Heart left ventricle (tissue), 16 donors: ENCODE measurements at regions of chr16 and their contacts with region 1.

Region 1: DNA sequence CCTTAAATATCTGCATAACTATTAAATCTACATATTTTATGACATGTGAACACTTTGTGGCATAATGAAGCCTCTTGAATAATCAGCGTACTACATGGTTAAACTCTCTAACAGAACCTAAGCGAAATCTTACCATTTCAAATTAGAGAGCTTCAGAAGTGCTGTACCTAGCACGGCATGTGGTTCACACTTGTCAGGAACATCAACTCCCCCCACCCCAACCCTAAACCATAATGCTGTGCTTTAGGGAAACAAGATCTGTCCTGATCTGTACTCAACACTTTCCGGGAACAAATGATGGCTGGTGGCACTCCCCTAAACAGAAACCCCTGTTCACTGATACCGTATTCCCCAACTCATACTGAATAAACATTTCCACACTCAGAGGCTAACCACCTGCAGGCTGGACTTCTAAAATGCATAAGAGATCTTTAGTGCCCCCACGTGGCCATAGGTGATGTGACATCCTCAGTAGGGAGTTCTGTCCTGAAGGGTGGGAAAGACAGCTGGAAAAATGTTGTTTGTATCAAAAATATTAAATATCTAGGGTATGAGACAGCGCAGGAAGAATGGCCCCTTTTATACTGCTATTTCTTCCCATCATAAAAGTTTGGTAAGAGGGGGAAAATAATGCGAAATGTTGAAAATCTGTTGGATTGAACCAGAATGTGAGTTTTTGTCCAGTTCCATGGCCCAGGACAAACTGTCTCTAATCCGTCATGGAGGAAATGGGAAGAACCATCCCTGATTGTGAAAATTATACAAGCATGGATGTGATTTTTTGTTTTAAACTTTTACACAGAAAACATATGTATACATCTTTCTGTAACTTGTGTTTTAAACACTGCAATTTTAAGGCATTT is 88.6 kb downstream of the USP31 start:
- DNase-seq: peak in 4 of 5 donors; percentile 57 to 73 (median 60)
- ATAC-seq: peak; percentile 57 to 84 (median 79)
- H3K4me3 ChIP-seq: no peak overlapping the region
- H3K27ac ChIP-seq: no peak overlapping the region
- H3K4me1 ChIP-seq: peaks cover 0 to 14% (median 5%) of the 10 kb centered on the region in 12 donors
- H3K27me3 ChIP-seq: peaks cover 0 to 3% (median 0%) of the 10 kb centered on the region in 9 donors
- CTCF ChIP-seq: peak; percentile 70 to 87 (median 82)
- POLR2A ChIP-seq: no peak

Region 2: DNA sequence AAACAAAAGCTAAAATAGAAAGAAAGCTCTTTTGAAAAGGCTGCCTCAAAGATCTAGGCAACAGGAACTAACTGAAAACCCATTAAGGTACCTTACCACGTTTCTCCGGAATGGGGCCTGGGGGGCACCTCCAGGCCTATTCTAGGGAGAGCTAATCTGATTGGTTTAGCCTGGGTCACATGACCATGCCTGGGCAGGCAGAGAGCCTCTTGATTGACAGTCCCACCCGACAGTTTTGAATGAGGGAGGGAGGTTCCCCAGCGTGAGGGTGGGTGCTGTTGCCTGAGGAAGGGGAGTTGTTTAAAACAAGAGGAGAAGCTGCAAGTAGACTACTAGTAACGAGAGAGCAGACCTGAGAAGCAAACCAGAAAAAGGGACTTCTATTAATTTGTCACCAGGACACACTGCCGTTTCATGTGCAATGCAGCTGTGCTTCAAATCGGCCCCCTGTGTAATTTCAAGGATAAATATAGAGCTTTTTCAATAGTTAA is 390.1 kb before region 1 on chr16:
- intact Hi-C with region 1: loop called in 1 of 10 experiments (anchors 10 kb)
- DNase-seq: peak in 1 of 5 donors; percentile 19
- ATAC-seq: no peak
- H3K4me3 ChIP-seq: no peak overlapping the region
- H3K27ac ChIP-seq: no peak overlapping the region
- H3K4me1 ChIP-seq: peaks cover 0 to 20% (median 0%) of the 10 kb centered on the region in 12 donors
- H3K27me3 ChIP-seq: peaks cover 0 to 10% (median 2%) of the 10 kb centered on the region in 9 donors
- CTCF ChIP-seq: no peak
- POLR2A ChIP-seq: no peak